Posterior vena cava (tissue), 2 donors: ENCODE measurements at regions of chr1 and their contacts with region 1.

Region 1: GRCh38 chr1:206706298-206706791 is 21.6 kb downstream of the MAPKAPK2 start:
- DNase-seq: peak; percentile 95

Region 2: DNA sequence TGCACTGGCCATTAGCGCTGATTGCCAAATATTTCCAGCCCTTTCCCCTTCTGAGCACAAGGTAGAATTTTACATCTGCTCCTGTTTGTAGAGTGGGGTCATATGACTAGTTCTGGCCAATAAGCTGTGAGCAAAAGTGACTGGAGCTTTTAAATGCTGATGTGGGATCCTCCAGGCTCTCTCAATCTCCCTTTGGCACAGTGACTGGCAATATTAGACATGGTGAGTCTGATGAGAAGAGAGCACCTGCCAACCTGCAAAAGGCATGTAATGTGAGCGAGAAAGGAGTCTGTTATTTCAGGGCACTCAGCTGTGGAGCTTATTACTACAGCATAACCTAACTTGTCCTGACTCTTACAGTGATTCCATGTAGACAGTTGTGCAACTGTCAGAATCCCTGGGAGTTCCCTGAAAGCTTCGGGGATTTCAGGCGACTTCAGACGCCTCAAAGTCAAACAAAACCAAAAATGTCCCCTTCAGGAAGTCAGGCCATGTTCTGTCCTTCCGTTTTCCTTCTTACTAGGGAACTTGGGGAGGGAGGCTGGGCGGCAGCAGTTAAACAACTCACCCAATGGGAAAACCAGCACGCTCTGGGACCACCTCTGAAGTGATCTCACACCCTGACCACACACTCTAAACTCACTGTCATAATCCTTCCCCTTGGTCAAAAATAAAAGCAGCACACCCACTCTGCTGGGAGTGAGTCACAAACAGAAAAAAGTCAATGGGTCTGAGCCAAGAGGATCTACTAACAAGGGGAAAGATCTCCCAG is 202.6 kb before region 1 on chr1:
- intact Hi-C with region 1: no loop called
- DNase-seq: peak; percentile 89

Region 3: DNA sequence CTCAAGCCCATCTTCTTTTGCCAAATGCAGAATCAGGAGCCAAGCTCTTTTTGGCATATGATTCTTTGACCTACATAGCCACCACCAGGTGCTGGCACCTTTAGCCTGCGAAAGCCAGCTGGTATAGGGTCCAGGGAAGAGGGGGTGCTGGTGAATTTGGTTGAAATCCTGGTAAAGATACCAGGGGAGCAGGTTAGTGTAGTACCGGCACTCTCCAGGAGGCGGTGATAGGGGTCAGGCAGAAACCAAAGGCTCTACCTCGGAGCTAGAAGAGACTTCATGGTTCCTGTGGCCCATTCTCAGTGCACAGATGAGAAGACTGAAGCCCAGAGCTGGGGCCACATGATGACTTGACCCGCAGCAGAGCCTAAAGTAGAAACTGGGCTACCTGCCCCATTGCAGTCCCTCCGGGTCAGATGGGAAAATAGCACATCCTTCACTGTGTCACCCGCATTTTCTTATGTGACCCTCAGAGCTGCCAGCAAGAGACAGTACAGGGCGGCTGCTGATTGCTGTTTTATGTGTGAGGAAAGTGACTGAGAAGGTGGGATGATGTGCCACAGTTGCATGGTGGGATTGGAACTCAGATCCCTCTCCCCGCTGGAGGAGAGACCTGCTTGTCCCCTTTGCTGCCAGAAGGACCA is 28.3 kb after region 1 on chr1:
- intact Hi-C with region 1: loop called in 1 of 2 experiments (anchors 1 kb)
- DNase-seq: no peak

Region 4: GRCh38 chr1:206761159-206761768 is 54.9 kb after region 1 on chr1:
- intact Hi-C with region 1: no loop called
- DNase-seq: no peak

Region 5: GRCh38 chr1:206784471-206784903 is 78.1 kb after region 1 on chr1:
- intact Hi-C with region 1: no loop called
- DNase-seq: no peak

Region 6: DNA sequence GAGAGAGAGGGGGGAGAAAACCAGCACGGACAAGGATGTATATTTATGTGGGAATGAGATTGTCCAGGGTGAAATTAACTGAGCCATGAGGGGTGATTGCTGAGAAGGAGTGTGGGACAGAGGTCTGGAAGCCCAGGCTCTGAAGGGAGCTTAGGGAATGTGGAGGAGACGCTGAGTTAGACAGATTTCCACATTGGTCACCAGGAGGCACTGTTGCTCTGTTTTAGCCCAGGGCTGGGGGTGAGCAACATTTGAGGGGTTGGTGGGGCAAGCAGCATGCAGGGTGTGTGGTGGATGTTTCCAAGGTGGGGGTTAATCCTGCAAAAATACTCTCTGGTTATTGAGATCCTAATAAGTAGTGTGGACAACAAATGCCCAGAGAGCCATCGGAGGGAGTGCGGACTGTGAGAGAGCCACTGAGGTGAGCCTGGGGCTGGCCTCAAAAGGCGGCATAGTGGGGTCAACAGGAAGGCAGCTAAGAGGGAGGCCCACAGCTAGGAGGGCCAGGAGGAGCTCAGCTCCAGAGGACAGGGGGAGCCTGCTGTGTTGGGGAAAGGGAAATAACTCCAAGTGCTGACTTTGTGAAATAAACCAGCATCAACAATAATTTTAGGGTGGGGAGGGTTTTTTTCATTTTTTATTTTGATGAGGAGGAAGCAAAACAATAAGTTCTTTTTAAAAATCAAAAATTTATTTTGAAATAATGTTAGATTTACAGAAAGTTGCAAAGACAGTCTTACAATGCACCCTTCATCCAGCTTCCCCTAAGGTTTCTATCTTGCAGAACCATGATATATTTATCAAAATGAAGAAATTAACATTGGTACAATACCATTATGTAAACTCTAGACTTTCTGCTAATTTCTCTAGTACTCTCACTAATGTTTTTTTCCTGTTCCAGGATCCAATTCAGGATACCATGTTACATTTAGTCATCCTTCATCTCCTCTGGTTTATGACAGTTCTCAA is 1287.4 kb after region 1 on chr1:
- intact Hi-C with region 1: no loop called
- DNase-seq: no peak